ENCODE measurements at regions of chr11 and their contacts with region 1.

Region 1: DNA sequence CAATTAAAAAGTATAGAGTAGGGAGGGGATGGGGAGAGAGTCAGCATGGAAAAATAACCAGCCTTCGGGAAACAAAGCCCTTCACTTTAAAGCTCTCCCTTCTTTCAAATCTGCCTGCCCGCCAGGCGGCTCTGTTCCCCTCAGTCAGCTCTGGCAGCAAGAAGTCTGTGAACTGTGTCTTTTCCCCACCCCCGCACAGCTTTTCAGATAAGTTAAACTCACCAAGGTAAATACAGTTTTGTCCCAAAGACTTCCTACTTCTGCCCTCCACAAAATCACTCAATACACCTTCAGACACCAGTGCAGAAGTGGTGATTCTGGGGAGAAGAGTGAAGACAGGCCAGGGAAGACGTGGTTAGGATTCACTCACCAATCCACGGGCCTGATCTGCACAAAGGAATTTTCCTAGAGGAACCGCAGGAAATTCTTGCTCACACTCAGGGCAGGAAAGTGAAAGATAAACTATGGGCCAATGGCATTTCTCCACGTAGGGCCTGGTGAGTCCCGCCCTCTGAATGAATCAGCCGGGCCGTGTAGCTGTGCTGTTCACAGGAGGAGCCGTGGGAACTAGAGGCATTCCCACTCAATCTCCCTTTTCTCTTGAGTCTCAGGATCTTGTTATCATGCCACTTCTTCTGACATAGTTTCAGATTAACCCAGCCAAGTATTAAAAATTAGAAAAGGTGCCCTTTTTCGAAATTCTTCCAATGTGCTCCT is at the start of gene TRIM5:
- DNase-seq: peak; percentile 47 to 90 (median 74)
- ATAC-seq: peak; percentile 83 to 87 (median 86)
- H3K4me3 ChIP-seq: peak within 1 kb of the TSS; percentile 62 to 73
- H3K4me3 Mint-ChIP-seq: peak within 1 kb of the TSS; percentile 89 to 96 (median 95)
- H3K27ac ChIP-seq: peak within 1 kb of the TSS; percentile 82
- H3K27ac Mint-ChIP-seq: peak within 1 kb of the TSS; percentile 97 to 98
- H3K4me1 ChIP-seq: peaks cover 13 to 24% of the 10 kb centered on the region in 2 experiments
- H3K4me1 Mint-ChIP-seq: peaks cover 41 to 65% (median 62%) of the 10 kb centered on the region in 3 donors
- H3K27me3 ChIP-seq: no peaks in the 10 kb centered on the region
- H3K27me3 Mint-ChIP-seq: no peaks in the 10 kb centered on the region
- total RNA-seq, gene TRIM5: 17.6 to 38.2 (median 31.6) TPM

Region 2: DNA sequence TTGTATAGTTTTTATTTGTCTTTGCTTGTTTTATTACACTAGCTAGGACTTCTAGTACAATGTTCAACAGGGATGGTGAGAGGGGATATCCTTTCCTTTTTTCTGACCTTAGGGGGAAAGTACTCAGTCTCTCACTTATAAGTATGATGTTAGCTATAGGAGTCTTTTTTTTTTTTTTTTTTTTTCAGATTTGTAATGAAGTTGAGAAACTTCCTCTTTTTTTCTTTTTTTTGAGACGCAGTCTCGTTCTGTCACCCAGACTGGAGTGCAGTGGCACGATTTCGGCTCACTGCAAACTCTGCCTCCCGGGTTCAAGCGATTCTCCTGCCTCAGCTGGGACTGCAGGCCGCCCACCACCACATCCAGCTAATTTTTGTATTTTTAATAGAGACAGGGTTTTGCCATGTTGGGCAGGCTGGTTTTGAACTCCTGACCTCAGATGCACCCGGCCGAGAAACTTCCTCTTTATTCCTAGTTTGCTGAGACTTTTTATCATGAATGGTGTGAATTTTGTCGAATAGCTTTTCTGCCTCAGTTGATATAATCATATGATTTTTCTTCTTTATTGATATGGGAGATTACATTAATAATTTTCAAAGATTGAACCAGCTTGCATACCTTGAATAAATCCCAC is 15.7 kb after region 1 on chr11:
- CTCF ChIA-PET with region 1: interaction called, 6 to 21 read pairs
- POLR2A ChIA-PET with region 1: interaction called, 7 to 8 read pairs
- DNase-seq: no peak
- ATAC-seq: no peak
- H3K4me3 ChIP-seq: no peak overlapping the region
- H3K4me3 Mint-ChIP-seq: peak overlapping the region in 1 of 3 donors; percentile 6
- H3K27ac ChIP-seq: no peak overlapping the region
- H3K27ac Mint-ChIP-seq: peak overlapping the region; percentile 37 to 39
- H3K4me1 ChIP-seq: no peaks in the 10 kb centered on the region
- H3K4me1 Mint-ChIP-seq: peaks cover 71 to 80% (median 77%) of the 10 kb centered on the region in 3 donors
- H3K27me3 ChIP-seq: no peaks in the 10 kb centered on the region
- H3K27me3 Mint-ChIP-seq: no peaks in the 10 kb centered on the region

Region 3: GRCh38 chr11:5712507-5712906 is 27.7 kb after region 1 on chr11:
- CTCF ChIA-PET with region 1: interaction called, 10 to 12 read pairs
- POLR2A ChIA-PET with region 1: interaction called, 3 to 4 read pairs
- DNase-seq: peak in 1 of 35 experiments; percentile 43
- ATAC-seq: peak in 1 of 4 experiments; percentile 50
- H3K4me3 ChIP-seq: no peak overlapping the region
- H3K4me3 Mint-ChIP-seq: no peak overlapping the region
- H3K27ac ChIP-seq: peak overlapping the region; percentile 29
- H3K27ac Mint-ChIP-seq: peak overlapping the region; percentile 32 to 44
- H3K4me1 ChIP-seq: no peaks in the 10 kb centered on the region
- H3K4me1 Mint-ChIP-seq: peaks cover 0 to 7% (median 4%) of the 10 kb centered on the region in 3 donors
- H3K27me3 ChIP-seq: no peaks in the 10 kb centered on the region
- H3K27me3 Mint-ChIP-seq: no peaks in the 10 kb centered on the region

Measured in T-cell (primary cell).